Activated CD8-positive, alpha-beta T cell treated with anti-CD3 and anti-CD28 coated beads, Interleukin-2, amount 10 ng/mL, durations not matched to agents 7 days and 5 days (primary cell): ENCODE measurements at regions of chr16 and their contacts with region 1.

Region 1: GRCh38 chr16:67017810-67018488 is 11.0 kb upstream of the CBFB start:
- DNase-seq: peak; percentile 94
- ATAC-seq: peak; percentile 78
- H3K4me3 Mint-ChIP-seq: no peak overlapping the region
- H3K27ac Mint-ChIP-seq: peak overlapping the region; percentile 54
- H3K4me1 Mint-ChIP-seq: peaks cover 46% of the 10 kb centered on the region
- H3K27me3 Mint-ChIP-seq: no peaks in the 10 kb centered on the region

Region 2: DNA sequence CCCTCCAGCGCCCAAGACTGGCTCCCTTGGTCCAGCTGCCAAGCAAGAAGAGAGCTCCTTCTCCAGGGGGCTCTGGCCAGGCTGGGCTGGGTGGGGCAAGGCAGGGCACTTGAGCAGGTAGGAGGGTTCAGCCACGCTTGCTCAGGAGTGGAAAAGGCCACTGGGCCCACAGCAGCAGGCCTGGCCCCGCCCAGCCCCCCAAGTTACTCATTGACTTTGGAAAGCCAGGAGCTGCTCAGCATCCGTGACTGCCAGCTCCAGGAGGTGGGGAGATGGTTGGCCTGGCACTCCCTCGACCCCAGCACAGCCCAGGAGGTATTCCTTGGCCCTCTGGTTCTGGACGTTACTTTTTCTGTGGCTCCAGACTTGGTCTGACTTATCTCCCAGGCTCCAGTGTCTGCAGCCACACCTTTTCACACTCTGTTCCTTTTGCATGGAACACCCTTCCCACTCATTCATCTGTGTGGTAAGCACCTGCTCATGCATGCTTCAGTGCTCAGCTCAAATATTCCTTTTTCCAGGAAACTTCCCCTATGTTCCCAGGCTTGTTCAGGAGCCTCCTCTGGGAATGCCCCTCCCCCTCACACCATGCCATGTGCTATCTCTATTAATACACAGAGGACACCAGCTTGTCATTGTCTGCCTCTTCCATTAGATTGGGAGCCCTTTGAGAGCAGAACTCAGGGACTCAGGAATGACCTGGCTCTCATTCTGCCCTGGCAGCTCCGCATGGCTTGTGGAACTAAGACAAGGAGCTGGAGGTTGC is 99.0 kb before region 1 on chr16 and contains the start of gene CDH16:
- CTCF ChIA-PET with region 1: no interaction called
- POLR2A ChIA-PET with region 1: no interaction called
- DNase-seq: no peak
- ATAC-seq: no peak
- H3K4me3 Mint-ChIP-seq: no peak within 1 kb of the TSS
- H3K27ac Mint-ChIP-seq: no peak within 1 kb of the TSS
- H3K4me1 Mint-ChIP-seq: peaks cover 2% of the 10 kb centered on the region
- H3K27me3 Mint-ChIP-seq: peaks cover 20% of the 10 kb centered on the region
- total RNA-seq, gene CDH16: not detected

Region 3: DNA sequence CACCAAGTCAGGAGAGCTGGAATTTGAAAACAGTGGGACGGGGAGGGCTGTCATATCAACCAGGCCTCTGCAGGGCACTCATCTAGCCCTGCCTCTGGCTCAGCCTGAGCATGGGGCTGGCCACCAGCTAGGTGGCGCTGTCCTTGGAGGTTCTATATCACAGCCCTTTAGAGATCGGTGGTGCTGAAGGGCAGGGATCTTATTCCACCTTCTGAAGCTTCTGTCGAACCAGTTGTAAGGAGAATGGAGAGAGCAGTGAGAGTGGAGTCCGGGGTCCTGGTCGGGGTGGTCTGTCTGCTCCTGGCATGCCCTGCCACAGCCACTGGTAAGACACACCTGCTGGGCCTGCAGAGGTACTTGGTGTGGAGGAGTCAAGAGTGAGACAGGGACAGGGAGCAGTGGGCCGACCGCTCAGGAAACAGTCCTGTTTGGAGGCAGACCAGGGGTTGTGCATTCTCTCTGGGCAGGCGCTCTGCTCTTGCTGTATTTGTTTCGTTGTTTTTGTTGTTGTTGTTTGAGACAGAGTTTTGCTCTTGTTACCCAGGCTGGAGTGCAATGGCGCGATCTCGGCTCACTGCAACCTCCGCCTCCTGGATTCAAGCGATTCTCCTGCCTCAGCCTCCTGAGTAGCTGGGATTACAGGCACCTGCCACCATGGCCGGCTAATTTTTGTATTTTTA is 56.7 kb before region 1 on chr16 and contains the start of gene CES3:
- CTCF ChIA-PET with region 1: interaction called, 31 read pairs
- POLR2A ChIA-PET with region 1: no interaction called
- DNase-seq: peak; percentile 79
- ATAC-seq: peak; percentile 97
- H3K4me3 Mint-ChIP-seq: peak within 1 kb of the TSS; percentile 48
- H3K27ac Mint-ChIP-seq: peak within 1 kb of the TSS; percentile 86
- H3K4me1 Mint-ChIP-seq: peaks cover 39% of the 10 kb centered on the region
- H3K27me3 Mint-ChIP-seq: peaks cover 2% of the 10 kb centered on the region
- total RNA-seq, gene CES3: 2.4 to 4.3 TPM

Region 4: DNA sequence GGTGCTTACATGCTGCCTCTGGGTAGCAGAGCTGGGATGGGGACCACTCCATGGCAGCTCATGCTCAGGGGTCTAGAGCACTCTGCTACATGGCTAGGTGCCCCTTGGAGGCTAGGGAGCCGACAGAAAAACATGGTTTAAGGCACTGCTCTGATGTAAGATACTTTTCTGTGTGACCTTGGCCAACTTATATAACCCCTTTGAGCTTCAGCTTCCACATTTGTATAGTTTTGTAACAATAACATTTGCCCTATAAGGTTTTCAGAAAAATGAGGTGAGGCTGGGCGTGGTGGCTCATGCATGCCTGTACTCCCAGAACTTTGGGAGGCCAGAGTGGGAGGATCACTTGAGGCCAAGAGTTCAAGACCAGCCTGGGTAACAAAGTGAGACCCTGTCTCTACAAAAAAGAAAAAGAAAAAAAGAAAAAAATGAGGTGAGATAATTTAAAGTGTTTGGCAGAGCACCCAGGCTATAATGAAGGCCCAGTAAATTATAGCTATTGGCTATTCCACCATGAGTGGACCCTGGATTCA is 26.3 kb before region 1 on chr16:
- CTCF ChIA-PET with region 1: interaction called, 16 read pairs
- POLR2A ChIA-PET with region 1: interaction called, 5 read pairs
- DNase-seq: no peak
- ATAC-seq: no peak
- H3K4me3 Mint-ChIP-seq: no peak overlapping the region
- H3K27ac Mint-ChIP-seq: no peak overlapping the region
- H3K4me1 Mint-ChIP-seq: peaks cover 25% of the 10 kb centered on the region
- H3K27me3 Mint-ChIP-seq: no peaks in the 10 kb centered on the region

Region 5: DNA sequence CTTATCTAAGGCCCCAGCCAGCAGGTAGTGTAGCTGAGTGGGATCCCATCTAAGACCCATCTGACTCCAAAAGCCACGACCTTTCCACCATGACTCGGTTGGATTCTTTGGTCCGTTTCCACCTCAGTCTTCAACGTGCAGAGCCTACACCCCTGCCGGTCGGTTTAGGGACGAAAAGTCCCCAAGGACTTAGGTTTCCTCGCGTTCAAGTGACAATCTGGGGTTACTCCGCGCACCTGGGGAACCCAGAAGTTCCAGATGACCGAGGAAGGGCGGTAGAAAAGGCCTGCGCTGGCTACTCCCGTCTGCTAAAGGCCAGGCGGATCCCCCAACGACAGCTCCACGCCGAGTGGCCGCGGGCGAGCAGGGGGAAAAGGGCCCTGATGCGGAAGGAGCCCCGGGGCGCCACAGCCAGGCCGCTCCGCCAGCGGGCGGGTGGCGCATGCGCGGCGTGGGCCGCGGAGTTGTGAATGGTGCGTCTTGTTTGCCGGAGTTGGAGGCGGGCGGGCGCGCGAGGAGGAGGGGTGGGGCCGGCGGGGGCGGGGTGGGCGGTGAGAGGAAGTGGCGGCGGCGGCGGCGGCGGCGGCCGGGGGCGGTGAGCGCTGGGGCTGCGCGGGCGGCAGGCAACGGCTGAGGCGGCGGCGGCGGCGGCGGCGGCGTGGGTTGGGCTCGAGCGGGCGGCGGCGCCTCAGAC is 10.8 kb after region 1 on chr16 and contains the start of gene CBFB:
- CTCF ChIA-PET with region 1: interaction called, 66 read pairs
- POLR2A ChIA-PET with region 1: interaction called, 18 read pairs
- DNase-seq: peak; percentile 95
- ATAC-seq: peak; percentile 94
- H3K4me3 Mint-ChIP-seq: peak within 1 kb of the TSS; percentile 95
- H3K27ac Mint-ChIP-seq: peak within 1 kb of the TSS; percentile 93
- H3K4me1 Mint-ChIP-seq: peaks cover 61% of the 10 kb centered on the region
- H3K27me3 Mint-ChIP-seq: no peaks in the 10 kb centered on the region
- total RNA-seq, gene CBFB: 235 to 241 TPM

Region 6: DNA sequence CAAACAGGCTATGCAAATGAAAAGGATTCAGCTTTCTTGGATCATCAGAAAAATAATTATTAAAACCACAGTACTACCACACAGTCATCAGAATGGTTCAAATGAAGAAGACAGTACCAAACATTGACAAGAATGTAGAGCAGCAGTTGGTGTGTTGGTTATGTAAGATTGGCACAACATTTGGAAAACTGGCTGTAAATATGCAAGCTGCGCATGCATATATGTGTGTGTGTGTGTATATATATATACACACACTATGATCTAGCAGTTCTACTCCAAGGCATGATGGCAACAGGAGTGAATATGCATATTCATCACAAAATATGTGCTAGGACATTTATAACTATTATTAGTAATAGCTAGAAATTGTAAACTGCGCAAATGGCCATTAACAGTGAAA is 57.4 kb after region 1 on chr16:
- CTCF ChIA-PET with region 1: interaction called, 15 read pairs
- POLR2A ChIA-PET with region 1: no interaction called
- DNase-seq: no peak
- ATAC-seq: no peak
- H3K4me3 Mint-ChIP-seq: no peak overlapping the region
- H3K27ac Mint-ChIP-seq: peak overlapping the region; percentile 30
- H3K4me1 Mint-ChIP-seq: peaks cover 3% of the 10 kb centered on the region
- H3K27me3 Mint-ChIP-seq: no peaks in the 10 kb centered on the region

Region 7: DNA sequence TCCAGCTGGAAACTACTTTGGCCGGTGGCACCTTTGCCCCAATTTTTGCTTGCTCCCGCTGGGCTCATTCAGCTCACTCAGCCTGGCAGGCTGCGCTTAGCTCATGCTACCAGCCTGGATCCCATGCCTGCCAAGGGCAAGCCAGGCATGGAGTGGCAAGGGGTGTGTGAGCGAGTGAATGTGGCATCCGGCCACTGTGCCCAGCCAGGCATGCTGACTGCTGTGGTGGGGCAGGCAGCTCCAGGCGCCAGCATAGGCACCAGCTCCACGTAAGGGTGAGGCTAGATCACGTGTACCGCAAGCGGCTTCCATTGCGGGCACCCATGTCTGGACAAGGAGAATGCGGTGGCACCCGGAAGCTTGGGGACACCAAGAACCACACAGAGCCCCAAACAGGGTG is 123.5 kb after region 1 on chr16:
- CTCF ChIA-PET with region 1: interaction called, 16 read pairs
- POLR2A ChIA-PET with region 1: no interaction called
- DNase-seq: no peak
- ATAC-seq: no peak
- H3K4me3 Mint-ChIP-seq: no peak overlapping the region
- H3K27ac Mint-ChIP-seq: no peak overlapping the region
- H3K4me1 Mint-ChIP-seq: no peaks in the 10 kb centered on the region
- H3K27me3 Mint-ChIP-seq: no peaks in the 10 kb centered on the region

Region 8: GRCh38 chr16:67183627-67184328 is 165.8 kb after region 1 on chr16 and contains the start of gene MATCAP1:
- CTCF ChIA-PET with region 1: interaction called, 42 read pairs
- POLR2A ChIA-PET with region 1: no interaction called
- DNase-seq: peak; percentile 97
- ATAC-seq: peak; percentile 95
- H3K4me3 Mint-ChIP-seq: no peak within 1 kb of the TSS
- H3K27ac Mint-ChIP-seq: no peak within 1 kb of the TSS
- H3K4me1 Mint-ChIP-seq: peaks cover 19% of the 10 kb centered on the region
- H3K27me3 Mint-ChIP-seq: peaks cover 13% of the 10 kb centered on the region
- total RNA-seq, gene MATCAP1: 43.3 to 48.2 TPM